ENCODE measurements at regions of chr6 and their contacts with region 1.

Region 1: GRCh38 chr6:63598049-63599036 is 26.1 kb downstream of the LOC128125822 start:
- DNase-seq: peak; percentile 69 to 84 (median 73)
- H3K4me3 ChIP-seq: peak overlapping the region in 2 of 4 donors; percentile 38 to 59
- H3K27ac ChIP-seq: peak overlapping the region in 1 of 5 donors; percentile 35
- H3K4me1 ChIP-seq: peaks cover 0 to 12% of the 10 kb centered on the region in 2 donors
- H3K27me3 ChIP-seq: no peaks in the 10 kb centered on the region
- CTCF ChIP-seq: peak; percentile 66 to 95 (median 88)
- POLR2A ChIP-seq: no peak

Region 2: GRCh38 chr6:63764318-63764916 is 166.1 kb after region 1 on chr6:
- intact Hi-C with region 1: loop called (anchors 5 kb)
- DNase-seq: no peak
- H3K4me3 ChIP-seq: no peak overlapping the region
- H3K27ac ChIP-seq: no peak overlapping the region
- H3K4me1 ChIP-seq: no peaks in the 10 kb centered on the region
- H3K27me3 ChIP-seq: no peaks in the 10 kb centered on the region
- CTCF ChIP-seq: peak; percentile 48 to 81 (median 70)
- POLR2A ChIP-seq: no peak